ENCODE measurements at regions of chr4 and their contacts with region 1.

Region 1: GRCh38 chr4:158172261-158173258 is at the start of gene GASK1B:
- DNase-seq: no peak
- ATAC-seq: peak; percentile 53
- H3K4me3 ChIP-seq: peak within 1 kb of the TSS; percentile 89 to 97
- H3K27ac ChIP-seq: peak within 1 kb of the TSS; percentile 92 to 99
- H3K4me1 ChIP-seq: peaks cover 5 to 12% of the 10 kb centered on the region in 2 donors
- H3K27me3 ChIP-seq: no peaks in the 10 kb centered on the region
- total RNA-seq, gene GASK1B: 116 to 173 TPM

Region 2: DNA sequence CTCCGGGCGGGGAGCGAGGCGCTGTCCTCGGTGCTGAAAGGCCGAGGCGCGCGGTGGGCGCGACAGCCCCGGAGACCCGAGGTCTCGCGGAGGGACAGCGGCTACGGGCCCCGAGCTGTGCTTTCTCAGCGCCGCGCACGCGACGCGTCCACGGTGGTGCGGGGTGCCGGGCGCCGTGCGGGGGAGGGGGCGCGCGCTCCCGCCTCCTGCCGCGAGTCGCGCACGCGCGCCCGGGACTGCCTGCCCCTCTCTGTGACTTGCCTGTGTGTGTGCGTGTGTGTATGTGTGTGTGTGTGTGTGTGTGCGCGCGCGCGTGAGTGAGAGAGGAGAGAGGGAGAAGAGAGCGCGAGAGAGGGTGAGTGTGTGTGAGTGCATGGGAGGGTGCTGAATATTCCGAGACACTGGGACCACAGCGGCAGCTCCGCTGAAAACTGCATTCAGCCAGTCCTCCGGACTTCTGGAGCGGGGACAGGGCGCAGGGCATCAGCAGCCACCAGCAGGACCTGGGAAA is 952.1 kb before region 1 on chr4 and contains the start of gene GRIA2:
- intact Hi-C with region 1: loop called in 1 of 2 experiments (anchors 10 kb)
- DNase-seq: peak; percentile 72 to 92
- ATAC-seq: peak; percentile 88
- H3K4me3 ChIP-seq: peak within 1 kb of the TSS; percentile 13 to 75
- H3K27ac ChIP-seq: peak within 1 kb of the TSS; percentile 79 to 83
- H3K4me1 ChIP-seq: no peaks in the 10 kb centered on the region
- H3K27me3 ChIP-seq: no peaks in the 10 kb centered on the region
- total RNA-seq, gene GRIA2: 19.2 to 23.5 TPM

Region 3: GRCh38 chr4:157992038-157992705 is 180.4 kb before region 1 on chr4:
- intact Hi-C with region 1: loop called (anchors 1 to 5 kb)
- DNase-seq: no peak
- ATAC-seq: peak; percentile 93
- H3K4me3 ChIP-seq: peak overlapping the region; percentile 31 to 89
- H3K27ac ChIP-seq: no peak overlapping the region
- H3K4me1 ChIP-seq: no peaks in the 10 kb centered on the region
- H3K27me3 ChIP-seq: no peaks in the 10 kb centered on the region

Region 4: DNA sequence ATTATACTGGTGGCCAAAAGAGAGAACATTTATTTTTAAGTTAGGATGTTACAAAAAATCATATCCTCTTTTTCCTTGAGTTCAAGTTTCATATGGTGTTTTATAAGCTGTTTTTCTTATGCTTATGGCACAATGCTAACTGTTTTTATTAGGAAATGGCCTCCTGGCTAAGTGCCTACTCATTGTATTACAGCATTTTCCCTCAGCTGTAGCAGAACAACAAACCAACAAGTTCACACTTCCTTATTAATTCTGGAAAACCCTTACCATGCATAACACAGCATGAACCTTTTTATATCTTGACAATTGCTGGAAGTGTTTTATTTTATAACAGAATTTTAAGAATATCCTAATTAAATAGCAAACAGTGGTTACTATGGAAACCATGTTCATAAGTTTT is 165.6 kb before region 1 on chr4:
- intact Hi-C with region 1: loop called in 1 of 2 experiments (anchors 5 kb)
- DNase-seq: no peak
- ATAC-seq: peak; percentile 77
- H3K4me3 ChIP-seq: no peak overlapping the region
- H3K27ac ChIP-seq: no peak overlapping the region
- H3K4me1 ChIP-seq: peaks cover 2 to 5% of the 10 kb centered on the region in 2 donors
- H3K27me3 ChIP-seq: no peaks in the 10 kb centered on the region

Region 5: GRCh38 chr4:158209825-158210807 is 37.6 kb after region 1 on chr4 and contains the start of gene TMEM144:
- intact Hi-C with region 1: loop called (anchors 5 kb)
- DNase-seq: peak; percentile 97
- ATAC-seq: peak; percentile 98
- H3K4me3 ChIP-seq: peak within 1 kb of the TSS; percentile 43 to 47
- H3K27ac ChIP-seq: peak within 1 kb of the TSS; percentile 83 to 99
- H3K4me1 ChIP-seq: peaks cover 2 to 3% of the 10 kb centered on the region in 2 donors
- H3K27me3 ChIP-seq: no peaks in the 10 kb centered on the region
- total RNA-seq, gene TMEM144: 14.1 to 18.9 TPM

Region 6: DNA sequence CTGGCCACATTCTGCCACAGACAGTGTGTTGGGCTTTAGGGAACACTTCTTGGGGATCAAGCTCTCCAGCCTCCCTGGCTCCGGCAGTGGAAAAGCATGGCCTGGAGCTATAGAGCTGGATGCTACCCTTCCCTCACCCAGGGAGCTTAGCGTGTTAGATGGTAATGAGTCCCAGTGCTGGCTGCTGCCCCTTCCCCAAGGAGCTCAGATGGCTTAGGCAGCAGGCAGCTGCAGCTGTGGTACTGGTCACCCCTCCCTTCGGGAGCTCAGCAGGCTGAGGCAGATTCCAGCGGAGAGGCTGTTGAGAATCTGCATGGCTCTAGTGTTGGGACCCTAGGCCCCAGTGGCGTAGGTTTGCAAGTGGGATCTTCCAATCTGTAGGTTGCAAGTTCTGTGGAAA is 57.2 kb after region 1 on chr4:
- intact Hi-C with region 1: no loop called
- DNase-seq: no peak
- ATAC-seq: no peak
- H3K4me3 ChIP-seq: no peak overlapping the region
- H3K27ac ChIP-seq: no peak overlapping the region
- H3K4me1 ChIP-seq: peaks cover 0 to 1% of the 10 kb centered on the region in 2 donors
- H3K27me3 ChIP-seq: no peaks in the 10 kb centered on the region

Region 7: DNA sequence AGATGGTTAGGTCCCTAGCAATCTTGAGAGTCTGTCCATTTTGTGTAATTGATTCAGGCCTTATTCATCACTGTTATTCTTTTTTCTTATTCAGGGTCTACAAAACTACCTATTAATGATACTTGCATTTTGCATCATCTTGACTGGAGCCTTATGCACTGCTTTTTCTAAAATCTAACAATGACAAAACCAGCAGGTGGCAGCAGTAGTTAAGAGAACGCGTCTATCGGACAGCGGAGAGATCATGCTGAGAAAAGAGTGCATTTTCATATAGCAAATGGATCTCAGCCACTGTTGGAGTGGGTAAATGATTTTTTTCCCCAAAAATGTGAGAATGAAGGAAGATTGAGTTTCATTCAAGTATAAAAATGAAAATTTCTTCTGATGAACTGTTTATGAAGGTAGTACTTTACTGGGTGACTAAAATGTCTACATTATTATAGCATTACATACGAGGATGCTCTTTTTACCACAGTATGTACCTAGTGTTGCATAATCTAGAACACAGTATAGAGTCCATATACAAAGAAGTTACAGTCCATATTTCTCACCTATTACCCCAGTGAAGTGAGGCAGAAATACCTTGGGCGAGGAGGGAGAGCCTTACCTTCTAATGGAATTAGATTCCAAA is 80.9 kb after region 1 on chr4:
- intact Hi-C with region 1: loop called (anchors 5 kb)
- DNase-seq: peak in 1 of 2 donors; percentile 47
- ATAC-seq: peak; percentile 78
- H3K4me3 ChIP-seq: no peak overlapping the region
- H3K27ac ChIP-seq: no peak overlapping the region
- H3K4me1 ChIP-seq: no peaks in the 10 kb centered on the region
- H3K27me3 ChIP-seq: no peaks in the 10 kb centered on the region

Region 8: DNA sequence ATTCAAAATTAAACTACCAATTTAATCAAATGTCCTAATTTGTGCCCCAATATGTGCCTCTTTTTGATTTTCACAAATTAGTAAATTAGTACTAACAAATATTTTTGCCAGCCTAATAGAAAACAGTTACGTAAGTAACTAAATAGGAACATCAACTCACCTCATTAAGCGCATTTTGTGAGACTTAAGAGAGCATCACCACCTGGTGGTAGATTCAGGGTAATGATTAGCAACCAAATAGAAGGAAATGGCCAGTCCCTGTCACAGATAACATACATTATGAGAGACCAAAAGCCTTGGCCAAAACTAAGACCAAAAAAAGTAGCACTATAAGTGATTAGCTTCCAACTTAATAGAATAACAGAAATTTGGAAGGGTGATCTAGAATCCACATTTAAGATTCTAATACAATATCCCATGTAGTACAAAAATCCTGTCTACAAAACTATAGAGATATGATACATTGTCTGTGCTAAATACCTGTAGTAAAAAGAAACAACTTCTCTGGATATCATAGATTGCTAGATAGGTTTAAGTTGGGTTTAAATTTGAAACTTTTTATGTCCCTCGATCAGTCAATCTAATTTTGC is 452.4 kb after region 1 on chr4:
- intact Hi-C with region 1: loop called in 1 of 2 experiments (anchors 10 kb)
- DNase-seq: no peak
- ATAC-seq: peak; percentile 85
- H3K4me3 ChIP-seq: peak overlapping the region in 1 of 2 donors; percentile 34
- H3K27ac ChIP-seq: no peak overlapping the region
- H3K4me1 ChIP-seq: no peaks in the 10 kb centered on the region
- H3K27me3 ChIP-seq: no peaks in the 10 kb centered on the region